ENCODE measurements at regions of chr19 and their contacts with region 1.

Region 1: GRCh38 chr19:8321060-8321985 is at the starts of genes NDUFA7 and RPS28:
- DNase-seq: peak; percentile 99
- H3K4me3 Mint-ChIP-seq: peak within 1 kb of the TSS; percentile 100
- H3K27ac Mint-ChIP-seq: peak within 1 kb of the TSS; percentile 95
- H3K4me1 Mint-ChIP-seq: peaks cover 30% of the 10 kb centered on the region
- H3K27me3 Mint-ChIP-seq: no peaks in the 10 kb centered on the region
- total RNA-seq, gene NDUFA7: 95.9 to 104 TPM
- total RNA-seq, gene RPS28: 2,814 to 3,007 TPM

Region 2: GRCh38 chr19:7919610-7920518 is 401.5 kb before region 1 on chr19 and contains the start of gene SNAPC2:
- CTCF ChIA-PET with region 1: no interaction called
- intact Hi-C with region 1: loop called (anchors 1 kb)
- DNase-seq: peak; percentile 96
- H3K4me3 Mint-ChIP-seq: peak within 1 kb of the TSS; percentile 81
- H3K27ac Mint-ChIP-seq: peak within 1 kb of the TSS; percentile 73
- H3K4me1 Mint-ChIP-seq: peaks cover 38% of the 10 kb centered on the region
- H3K27me3 Mint-ChIP-seq: peaks cover 25% of the 10 kb centered on the region
- total RNA-seq, gene SNAPC2: 10.9 to 12.4 TPM

Region 3: GRCh38 chr19:8005534-8006256 is 315.6 kb before region 1 on chr19 and contains the start of gene ELAVL1:
- CTCF ChIA-PET with region 1: no interaction called
- intact Hi-C with region 1: loop called (anchors 1 kb)
- DNase-seq: peak; percentile 89
- H3K4me3 Mint-ChIP-seq: peak within 1 kb of the TSS; percentile 94
- H3K27ac Mint-ChIP-seq: peak within 1 kb of the TSS; percentile 78
- H3K4me1 Mint-ChIP-seq: peaks cover 35% of the 10 kb centered on the region
- H3K27me3 Mint-ChIP-seq: no peaks in the 10 kb centered on the region
- total RNA-seq, gene ELAVL1: 135 to 140 TPM

Region 4: GRCh38 chr19:8269724-8270123 is 51.6 kb before region 1 on chr19:
- CTCF ChIA-PET with region 1: no interaction called
- intact Hi-C with region 1: loop called (anchors 2 kb)
- DNase-seq: no peak
- H3K4me3 Mint-ChIP-seq: peak overlapping the region; percentile 78
- H3K27ac Mint-ChIP-seq: peak overlapping the region; percentile 84
- H3K4me1 Mint-ChIP-seq: peaks cover 12% of the 10 kb centered on the region
- H3K27me3 Mint-ChIP-seq: no peaks in the 10 kb centered on the region

Region 5: DNA sequence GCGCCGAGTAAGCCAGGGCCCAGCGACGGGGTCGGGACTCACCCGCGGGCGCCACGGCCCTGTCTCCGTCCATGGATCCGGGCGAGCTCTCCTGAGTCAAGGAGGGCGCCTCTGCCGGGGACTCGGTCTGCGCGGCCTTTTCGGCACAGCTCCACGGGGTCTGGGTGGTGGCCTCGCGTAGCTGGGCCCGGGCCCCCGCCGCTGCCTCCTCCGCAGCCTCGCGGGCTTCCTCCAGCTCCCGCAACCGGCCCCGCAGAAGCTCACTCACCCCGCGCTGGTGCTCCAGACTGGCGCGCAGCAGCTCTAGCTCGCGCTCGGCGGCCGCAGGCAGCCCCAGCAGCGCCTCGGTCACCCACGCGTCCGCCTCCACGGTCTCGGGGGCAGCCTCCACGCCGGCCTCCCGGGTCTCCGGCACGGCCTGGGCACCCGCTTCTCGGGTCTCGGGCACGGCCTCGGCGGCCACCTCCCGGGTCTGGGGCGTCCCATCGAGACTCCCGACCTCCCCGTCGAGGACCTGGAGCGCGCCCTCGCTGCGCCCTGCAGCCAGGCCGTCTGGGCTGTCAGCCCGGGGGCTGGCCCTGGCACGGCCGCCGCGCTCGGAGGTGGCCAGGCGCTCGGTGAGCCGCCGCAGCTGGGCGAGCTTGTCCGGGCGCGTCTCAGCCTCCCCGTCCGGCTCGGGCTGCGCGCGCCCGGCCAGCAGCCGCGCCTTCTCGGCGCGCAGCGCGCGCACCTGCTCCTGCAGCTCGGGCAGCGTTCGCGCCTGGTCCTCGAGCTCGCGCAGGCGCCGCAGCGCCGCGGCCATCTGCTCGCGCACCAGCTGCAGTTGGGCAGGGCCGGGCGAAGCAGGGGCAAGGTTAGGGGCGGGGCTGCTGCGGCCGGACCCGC is 13.4 kb after region 1 on chr19:
- CTCF ChIA-PET with region 1: interaction called, 10 read pairs
- intact Hi-C with region 1: no loop called
- DNase-seq: no peak
- H3K4me3 Mint-ChIP-seq: no peak overlapping the region
- H3K27ac Mint-ChIP-seq: no peak overlapping the region
- H3K4me1 Mint-ChIP-seq: peaks cover 4% of the 10 kb centered on the region
- H3K27me3 Mint-ChIP-seq: peaks cover 24% of the 10 kb centered on the region

Region 6: DNA sequence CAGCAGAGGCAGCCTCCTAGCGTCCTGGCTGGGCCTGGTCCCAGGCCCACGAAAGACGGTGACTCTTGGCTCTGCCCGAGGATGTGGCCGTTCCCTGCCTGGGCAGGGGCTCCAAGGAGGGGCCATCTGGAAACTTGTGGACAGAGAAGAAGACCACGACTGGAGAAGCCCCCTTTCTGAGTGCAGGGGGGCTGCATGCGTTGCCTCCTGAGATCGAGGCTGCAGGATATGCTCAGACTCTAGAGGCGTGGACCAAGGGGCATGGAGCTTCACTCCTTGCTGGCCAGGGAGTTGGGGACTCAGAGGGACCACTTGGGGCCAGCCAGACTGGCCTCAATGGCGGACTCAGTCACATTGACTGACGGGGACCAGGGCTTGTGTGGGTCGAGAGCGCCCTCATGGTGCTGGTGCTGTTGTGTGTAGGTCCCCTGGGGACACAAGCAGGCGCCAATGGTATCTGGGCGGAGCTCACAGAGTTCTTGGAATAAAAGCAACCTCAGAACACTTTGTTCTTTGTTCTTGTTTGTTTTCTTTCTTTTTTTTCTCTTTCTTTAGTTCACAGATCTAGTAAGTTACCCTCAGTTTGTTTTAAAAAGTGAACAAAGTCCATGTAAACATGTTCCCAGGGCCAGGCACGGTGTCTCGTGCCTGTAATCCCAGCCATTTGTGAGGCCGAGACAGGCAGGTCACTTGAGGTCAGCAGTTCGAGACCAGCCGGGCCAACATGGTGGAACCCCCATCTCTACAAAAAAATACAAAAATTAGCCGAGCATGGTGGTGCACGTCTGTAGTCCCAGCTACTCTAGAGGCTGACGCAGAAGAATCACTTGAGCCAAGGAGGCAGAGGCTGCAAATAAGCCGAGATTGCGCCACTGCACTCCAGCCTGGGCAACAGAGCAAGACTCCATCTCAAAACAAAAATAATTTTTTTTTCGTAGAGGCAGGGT is 52.8 kb after region 1 on chr19:
- CTCF ChIA-PET with region 1: no interaction called
- intact Hi-C with region 1: no loop called
- DNase-seq: no peak
- H3K4me3 Mint-ChIP-seq: no peak overlapping the region
- H3K27ac Mint-ChIP-seq: no peak overlapping the region
- H3K4me1 Mint-ChIP-seq: peaks cover 5% of the 10 kb centered on the region
- H3K27me3 Mint-ChIP-seq: no peaks in the 10 kb centered on the region

Region 7: GRCh38 chr19:8389891-8390616 is 68.7 kb after region 1 on chr19 and contains the start of gene RAB11B:
- CTCF ChIA-PET with region 1: no interaction called
- intact Hi-C with region 1: loop called (anchors 1 kb)
- DNase-seq: peak; percentile 100
- H3K4me3 Mint-ChIP-seq: peak within 1 kb of the TSS; percentile 93
- H3K27ac Mint-ChIP-seq: peak within 1 kb of the TSS; percentile 96
- H3K4me1 Mint-ChIP-seq: peaks cover 25% of the 10 kb centered on the region
- H3K27me3 Mint-ChIP-seq: no peaks in the 10 kb centered on the region
- total RNA-seq, gene RAB11B: 61.9 to 69.6 TPM

Region 8: DNA sequence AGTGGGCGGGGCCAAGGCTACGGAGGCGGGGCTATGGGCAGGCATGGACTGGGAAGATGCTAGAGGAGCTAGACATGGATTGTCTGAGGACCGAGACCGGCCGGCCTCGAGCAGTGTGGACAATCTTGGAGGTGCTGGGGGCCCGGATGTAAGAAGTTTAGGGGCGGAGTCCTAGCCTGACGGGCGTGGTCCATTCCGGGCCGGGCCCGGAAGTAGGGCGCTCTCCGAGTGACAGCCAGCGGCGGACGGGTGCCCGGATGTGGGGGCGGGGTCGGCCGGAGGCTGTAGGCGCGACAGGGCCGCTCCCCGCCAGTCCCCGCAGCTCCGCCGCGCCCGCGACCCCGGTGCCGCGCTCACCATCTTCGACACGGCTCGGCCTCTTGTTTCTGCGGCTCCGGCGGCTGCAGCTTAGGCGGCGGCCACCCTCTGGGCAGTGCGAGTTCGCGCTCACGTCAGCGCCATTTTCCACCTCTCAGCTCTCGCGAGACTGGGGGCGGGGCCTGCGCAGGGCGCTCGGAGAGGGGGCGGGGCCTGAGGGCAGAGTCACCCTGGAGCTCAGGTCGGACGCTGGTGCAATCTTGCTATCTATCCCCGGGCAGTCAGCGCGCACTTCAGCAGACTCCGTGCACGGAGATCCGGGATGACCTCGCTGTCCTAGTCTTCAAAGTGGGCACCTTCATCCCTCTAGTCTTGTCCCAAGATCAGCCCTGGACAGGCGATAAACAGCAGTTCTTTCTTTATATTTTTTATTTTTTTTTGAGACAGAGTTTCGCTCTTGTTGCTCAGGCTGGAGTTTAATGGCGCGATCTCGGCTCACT is 192.6 kb after region 1 on chr19 and contains the start of gene ZNF414:
- CTCF ChIA-PET with region 1: no interaction called
- intact Hi-C with region 1: loop called (anchors 1 kb)
- DNase-seq: peak; percentile 98
- H3K4me3 Mint-ChIP-seq: peak within 1 kb of the TSS; percentile 97
- H3K27ac Mint-ChIP-seq: peak within 1 kb of the TSS; percentile 97
- H3K4me1 Mint-ChIP-seq: peaks cover 47% of the 10 kb centered on the region
- H3K27me3 Mint-ChIP-seq: no peaks in the 10 kb centered on the region
- total RNA-seq, gene ZNF414: 19.8 to 24.1 TPM

Region 9: GRCh38 chr19:9538183-9539058 is 1217.1 kb after region 1 on chr19 and contains the start of gene ZNF426:
- CTCF ChIA-PET with region 1: no interaction called
- intact Hi-C with region 1: no loop called
- DNase-seq: peak; percentile 95
- H3K4me3 Mint-ChIP-seq: peak within 1 kb of the TSS; percentile 98
- H3K27ac Mint-ChIP-seq: peak within 1 kb of the TSS; percentile 96
- H3K4me1 Mint-ChIP-seq: peaks cover 22% of the 10 kb centered on the region
- H3K27me3 Mint-ChIP-seq: no peaks in the 10 kb centered on the region
- total RNA-seq, gene ZNF426: 11.2 to 12.3 TPM

Measured in activated naive CD4-positive, alpha-beta T cell treated with anti-CD3 and anti-CD28 coated beads for 36 hours (primary cell).